Activated T-helper 2 cell treated with anti-CD3 and anti-CD28 coated beads, Interferon-gamma antibody, Interleukin-2, Interleukin-4, amounts not matched to agents 10 μg/mL and 5 μg/mL and 100 μg/mL, durations not matched to agents 14 hours and 24 hours and 36 hours (primary cell): ENCODE measurements at regions of chr1 and their contacts with region 1.

Region 1: DNA sequence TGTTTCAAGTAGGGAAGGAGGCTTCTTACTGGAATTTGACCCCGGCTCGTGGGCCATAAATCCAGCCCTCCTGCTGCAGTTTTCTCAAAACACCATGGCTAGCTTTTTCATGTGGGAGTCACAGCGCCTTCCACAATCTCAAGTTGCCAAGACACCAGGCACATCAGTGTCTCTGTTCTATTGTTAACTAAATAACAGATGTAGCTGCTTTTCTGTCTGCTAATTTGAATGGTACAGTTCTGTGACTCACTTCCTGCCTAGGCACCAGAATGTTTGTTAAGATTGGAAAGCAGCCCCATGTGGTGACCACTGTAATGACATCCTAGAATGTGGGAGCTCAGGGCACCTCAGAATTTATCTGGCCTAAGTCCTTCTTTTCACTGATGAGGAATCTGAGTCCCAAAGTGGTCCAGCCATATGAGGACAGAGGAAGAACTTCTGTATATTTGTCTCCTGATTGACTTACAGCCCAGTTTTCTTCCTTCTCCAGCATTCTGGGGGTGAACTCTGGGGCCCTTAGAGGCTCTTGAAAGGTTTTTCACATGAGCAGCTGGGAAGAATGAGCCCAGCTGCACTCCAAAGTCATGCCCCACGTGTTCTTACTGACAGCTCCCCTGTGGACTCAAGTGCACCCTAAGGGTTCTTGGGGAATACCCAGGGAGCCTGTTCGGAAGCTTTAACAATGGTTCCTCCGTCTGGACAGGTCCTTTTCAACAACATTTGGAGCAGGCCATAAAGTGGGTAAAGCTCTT is 27.5 kb downstream of the TRIM45 start:
- DNase-seq: peak; percentile 22
- H3K4me3 Mint-ChIP-seq: no peak overlapping the region
- H3K27ac Mint-ChIP-seq: peak overlapping the region; percentile 35
- H3K4me1 Mint-ChIP-seq: peaks cover 16% of the 10 kb centered on the region
- H3K27me3 Mint-ChIP-seq: no peaks in the 10 kb centered on the region

Region 2: GRCh38 chr1:117079737-117080136 is 14.3 kb before region 1 on chr1:
- intact Hi-C with region 1: no loop called
- DNase-seq: no peak
- H3K4me3 Mint-ChIP-seq: no peak overlapping the region
- H3K27ac Mint-ChIP-seq: no peak overlapping the region
- H3K4me1 Mint-ChIP-seq: peaks cover 29% of the 10 kb centered on the region
- H3K27me3 Mint-ChIP-seq: no peaks in the 10 kb centered on the region

Region 3: DNA sequence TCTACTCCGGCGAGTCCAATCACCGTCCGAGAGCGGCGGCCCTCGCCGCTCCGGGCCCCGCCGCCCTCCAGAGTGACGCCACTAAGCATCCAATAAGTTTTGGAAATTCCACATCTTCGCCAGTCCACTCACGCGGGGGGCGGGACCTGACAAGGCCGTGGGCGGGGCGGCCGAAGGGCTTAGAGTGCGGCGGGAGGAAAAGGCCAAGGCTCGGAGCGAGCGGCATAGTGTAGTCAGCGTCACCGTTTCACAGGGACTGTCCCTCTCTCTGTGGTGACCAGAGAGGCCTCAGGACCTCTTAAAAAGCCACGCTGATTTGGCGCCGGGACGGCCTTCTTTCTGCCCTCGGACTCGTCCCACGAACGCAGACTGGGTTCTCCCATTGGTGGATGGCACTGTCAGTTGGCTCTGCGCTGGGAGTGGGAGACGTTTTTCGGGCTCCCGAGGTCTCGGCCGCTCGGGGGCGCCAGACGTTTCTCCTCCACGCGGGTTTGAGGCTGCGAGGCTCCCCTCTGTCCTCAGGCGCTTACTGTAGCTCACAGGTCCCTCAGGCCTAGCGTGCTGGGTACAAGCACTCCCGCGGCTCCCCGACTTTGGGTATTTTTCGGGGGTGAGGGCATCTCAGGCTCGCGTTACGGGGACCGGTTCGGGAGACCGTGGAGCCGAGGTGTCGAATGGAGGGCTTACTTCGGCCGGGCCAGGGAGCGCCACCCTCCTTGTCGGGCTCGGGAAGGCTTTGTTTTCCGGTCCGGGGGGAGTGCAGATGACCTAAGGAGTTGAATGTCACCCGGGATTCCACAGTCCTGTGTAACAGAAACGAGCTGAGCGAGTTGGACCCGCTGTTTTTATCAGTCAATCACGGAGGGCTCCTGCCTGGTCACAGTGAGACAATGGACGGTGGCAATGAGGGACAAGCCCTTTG is 28.0 kb after region 1 on chr1:
- intact Hi-C with region 1: loop called (anchors 2 kb)
- DNase-seq: peak; percentile 75
- H3K4me3 Mint-ChIP-seq: peak overlapping the region; percentile 81
- H3K27ac Mint-ChIP-seq: peak overlapping the region; percentile 19
- H3K4me1 Mint-ChIP-seq: peaks cover 5% of the 10 kb centered on the region
- H3K27me3 Mint-ChIP-seq: peaks cover 17% of the 10 kb centered on the region